Activated naive CD4-positive, alpha-beta T cell treated with anti-CD3 and anti-CD28 coated beads for 36 hours (primary cell): ENCODE measurements at regions of chr17 and their contacts with region 1.

Region 1: GRCh38 chr17:48678141-48678971 is 44.0 kb downstream of the PRAC1 start:
- DNase-seq: peak; percentile 74
- H3K4me3 Mint-ChIP-seq: no peak overlapping the region
- H3K27ac Mint-ChIP-seq: no peak overlapping the region
- H3K4me1 Mint-ChIP-seq: peaks cover 4% of the 10 kb centered on the region
- H3K27me3 Mint-ChIP-seq: peaks cover 20% of the 10 kb centered on the region

Region 2: DNA sequence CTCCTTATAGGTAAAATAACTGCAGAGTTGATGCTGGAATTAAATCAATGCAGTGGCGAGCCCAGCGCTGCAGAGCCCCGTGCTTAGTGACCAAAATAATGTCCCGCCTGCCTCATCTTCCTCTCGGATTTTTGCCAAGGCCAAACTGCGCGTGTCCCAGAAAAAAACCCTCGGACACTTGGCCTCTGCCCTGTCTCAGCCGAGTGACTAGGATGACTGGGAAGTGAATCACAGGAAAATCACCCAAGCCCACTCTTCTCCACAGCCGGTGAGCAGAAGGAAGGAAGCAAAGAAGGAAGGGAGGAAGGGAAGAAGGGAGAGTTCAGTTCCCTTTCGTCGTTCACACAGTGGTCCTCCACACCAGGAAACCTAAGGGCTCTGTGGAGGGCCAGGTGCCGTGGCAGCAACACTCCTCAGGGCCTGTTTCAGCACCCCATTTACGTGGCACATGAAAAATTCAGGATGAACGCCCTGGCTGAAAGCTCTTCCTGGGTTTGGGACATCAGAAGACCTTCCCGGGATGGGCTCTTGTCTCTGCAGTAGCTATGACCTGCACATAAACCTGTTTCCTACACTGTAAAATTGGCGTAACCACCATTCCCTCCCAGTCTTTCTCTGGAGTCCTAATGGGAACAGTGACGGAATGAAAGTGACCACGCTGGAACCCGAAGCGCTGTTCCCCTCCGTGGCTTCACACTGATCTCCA is 75.6 kb after region 1 on chr17:
- CTCF ChIA-PET with region 1: interaction called, 13 read pairs
- intact Hi-C with region 1: no loop called
- DNase-seq: no peak
- H3K4me3 Mint-ChIP-seq: no peak overlapping the region
- H3K27ac Mint-ChIP-seq: no peak overlapping the region
- H3K4me1 Mint-ChIP-seq: peaks cover 9% of the 10 kb centered on the region
- H3K27me3 Mint-ChIP-seq: peaks cover 82% of the 10 kb centered on the region

Region 3: GRCh38 chr17:48791128-48792032 is 113.0 kb after region 1 on chr17:
- CTCF ChIA-PET with region 1: interaction called, 45 read pairs
- intact Hi-C with region 1: loop called (anchors 2 kb)
- DNase-seq: peak; percentile 59
- H3K4me3 Mint-ChIP-seq: no peak overlapping the region
- H3K27ac Mint-ChIP-seq: no peak overlapping the region
- H3K4me1 Mint-ChIP-seq: no peaks in the 10 kb centered on the region
- H3K27me3 Mint-ChIP-seq: peaks cover 20% of the 10 kb centered on the region

Region 4: GRCh38 chr17:48816774-48817590 is 138.6 kb after region 1 on chr17 and contains the start of gene TTLL6:
- CTCF ChIA-PET with region 1: interaction called, 12 read pairs
- intact Hi-C with region 1: no loop called
- DNase-seq: peak; percentile 74
- H3K4me3 Mint-ChIP-seq: peak within 1 kb of the TSS; percentile 71
- H3K27ac Mint-ChIP-seq: no peak within 1 kb of the TSS
- H3K4me1 Mint-ChIP-seq: peaks cover 20% of the 10 kb centered on the region
- H3K27me3 Mint-ChIP-seq: peaks cover 28% of the 10 kb centered on the region
- total RNA-seq, gene TTLL6: not detected